A673 (cell line): ENCODE measurements at regions of chr15 and their contacts with region 1.

Region 1: DNA sequence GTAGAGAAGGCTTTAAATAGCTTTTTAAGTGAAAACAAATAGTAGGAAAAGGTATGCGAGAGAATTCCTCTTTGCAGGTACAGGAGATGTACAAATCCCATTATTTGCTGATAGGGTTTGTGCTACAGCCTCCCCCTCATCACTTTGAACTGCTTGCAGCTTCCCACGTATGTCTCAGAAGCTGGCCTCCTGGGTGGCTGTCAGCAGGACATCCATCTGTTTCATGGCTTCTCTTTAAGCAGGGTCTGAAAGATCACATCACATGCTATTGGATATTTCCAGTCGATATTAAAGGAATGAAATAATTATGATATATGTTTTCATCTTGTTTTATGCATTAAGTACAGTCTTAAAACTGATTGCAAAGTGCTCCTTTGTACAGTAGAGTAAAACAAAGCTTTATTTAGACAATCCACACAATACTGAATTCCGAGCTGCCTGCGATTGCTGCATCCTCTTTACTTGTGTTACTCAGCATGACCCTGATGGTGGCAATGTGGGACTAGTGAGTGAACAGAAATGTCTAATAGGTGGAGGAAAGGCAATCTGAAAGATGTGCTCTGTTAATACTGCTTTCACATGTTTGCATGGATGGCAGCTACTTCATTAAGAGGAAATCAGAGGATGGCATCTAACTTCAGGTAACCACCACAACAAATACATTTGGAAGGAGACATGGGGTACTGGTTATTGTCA is 930.6 kb upstream of the SEMA6D start:
- DNase-seq: peak; percentile 17
- H3K4me3 ChIP-seq: no peak overlapping the region
- H3K27ac ChIP-seq: no peak overlapping the region
- H3K4me1 ChIP-seq: no peaks in the 10 kb centered on the region
- H3K27me3 ChIP-seq: no peaks in the 10 kb centered on the region
- CTCF ChIP-seq: 0 out of 2 replicates have a peak, but pooled peaks have one; percentile 16

Region 2: DNA sequence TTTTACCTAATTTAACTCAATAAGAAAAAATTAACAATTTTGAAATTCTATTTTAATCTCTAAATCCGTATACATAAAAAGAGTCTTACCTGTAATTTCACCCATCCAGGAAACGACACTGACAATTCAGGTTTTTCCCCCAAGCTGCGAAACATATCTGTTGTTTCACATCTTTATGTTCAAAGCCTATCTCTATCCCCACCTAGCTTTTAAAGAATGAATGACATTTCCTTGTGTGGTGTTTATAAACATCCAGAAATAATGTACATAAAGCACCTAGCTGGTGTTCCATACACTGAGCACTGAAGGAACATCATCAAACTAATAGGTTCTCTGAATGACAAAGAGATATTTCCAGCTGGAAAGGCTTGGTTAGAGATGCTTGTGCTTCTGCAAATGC is 284.1 kb before region 1 on chr15:
- CTCF ChIA-PET with region 1: no interaction called
- POLR2A ChIA-PET with region 1: no interaction called
- intact Hi-C with region 1: no loop called
- DNase-seq: peak; percentile 40
- H3K4me3 ChIP-seq: no peak overlapping the region
- H3K27ac ChIP-seq: no peak overlapping the region
- H3K4me1 ChIP-seq: no peaks in the 10 kb centered on the region
- H3K27me3 ChIP-seq: no peaks in the 10 kb centered on the region
- CTCF ChIP-seq: peak; percentile 62

Region 3: GRCh38 chr15:46732060-46732459 is 54.7 kb before region 1 on chr15:
- CTCF ChIA-PET with region 1: no interaction called
- POLR2A ChIA-PET with region 1: no interaction called
- intact Hi-C with region 1: loop called (anchors 5 kb)
- DNase-seq: no peak
- H3K4me3 ChIP-seq: no peak overlapping the region
- H3K27ac ChIP-seq: no peak overlapping the region
- H3K4me1 ChIP-seq: no peaks in the 10 kb centered on the region
- H3K27me3 ChIP-seq: no peaks in the 10 kb centered on the region
- CTCF ChIP-seq: no peak